Activated T-helper 1 cell treated with anti-CD3 and anti-CD28 coated beads, Interleukin-12 subunit alpha, Interleukin-12 subunit beta, Interleukin-2, Interleukin-4 antibody, amounts not matched to agents 30 ng/mL and 10 ng/mL and 1 ng/mL, durations not matched to agents 14 hours and 24 hours and 36 hours (primary cell): ENCODE measurements at regions of chr2 and their contacts with region 1.

Region 1: GRCh38 chr2:136327162-136327852 is 209.4 kb upstream of the CXCR4 start:
- DNase-seq: peak; percentile 69
- H3K4me3 Mint-ChIP-seq: peak overlapping the region; percentile 43
- H3K27ac Mint-ChIP-seq: peak overlapping the region; percentile 91
- H3K4me1 Mint-ChIP-seq: peaks cover 68% of the 10 kb centered on the region
- H3K27me3 Mint-ChIP-seq: peaks cover 4% of the 10 kb centered on the region

Region 2: DNA sequence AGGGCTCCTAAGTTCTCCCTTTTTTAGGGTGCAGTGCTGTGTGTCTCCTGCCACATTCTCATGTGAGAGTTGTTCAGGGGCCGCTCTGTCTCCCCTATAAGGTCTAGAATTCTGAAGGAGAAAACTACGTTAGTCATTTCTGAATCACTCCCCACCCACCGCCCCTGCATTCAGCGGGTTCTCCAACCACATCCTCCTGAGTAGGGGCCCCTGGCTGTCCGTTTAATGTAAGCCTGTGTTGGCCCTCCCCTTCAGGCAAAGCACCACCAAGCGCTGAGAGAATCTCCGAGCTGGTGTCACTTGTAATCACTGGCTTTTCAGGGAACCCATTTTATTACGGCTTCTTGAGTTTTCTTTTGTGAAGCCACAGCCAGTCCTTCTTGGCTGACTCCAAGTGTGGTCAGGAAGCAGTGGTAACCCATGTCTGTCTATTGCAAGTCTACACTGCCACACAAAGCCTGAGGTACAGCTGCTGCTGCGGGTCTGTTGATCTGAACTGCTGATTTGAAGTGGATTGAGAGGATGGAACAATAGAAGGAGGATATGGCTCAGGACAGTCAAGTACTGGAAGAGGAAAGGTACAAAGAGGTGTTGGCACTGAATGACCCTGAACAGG is 507.2 kb before region 1 on chr2:
- intact Hi-C with region 1: loop called (anchors 5 kb)
- DNase-seq: peak; percentile 75
- H3K4me3 Mint-ChIP-seq: peak overlapping the region; percentile 80
- H3K27ac Mint-ChIP-seq: peak overlapping the region; percentile 89
- H3K4me1 Mint-ChIP-seq: peaks cover 52% of the 10 kb centered on the region
- H3K27me3 Mint-ChIP-seq: no peaks in the 10 kb centered on the region

Region 3: GRCh38 chr2:135948642-135949355 is 378.5 kb before region 1 on chr2:
- intact Hi-C with region 1: loop called (anchors 1 kb)
- DNase-seq: no peak
- H3K4me3 Mint-ChIP-seq: peak overlapping the region; percentile 53
- H3K27ac Mint-ChIP-seq: peak overlapping the region; percentile 87
- H3K4me1 Mint-ChIP-seq: peaks cover 58% of the 10 kb centered on the region
- H3K27me3 Mint-ChIP-seq: no peaks in the 10 kb centered on the region

Region 4: DNA sequence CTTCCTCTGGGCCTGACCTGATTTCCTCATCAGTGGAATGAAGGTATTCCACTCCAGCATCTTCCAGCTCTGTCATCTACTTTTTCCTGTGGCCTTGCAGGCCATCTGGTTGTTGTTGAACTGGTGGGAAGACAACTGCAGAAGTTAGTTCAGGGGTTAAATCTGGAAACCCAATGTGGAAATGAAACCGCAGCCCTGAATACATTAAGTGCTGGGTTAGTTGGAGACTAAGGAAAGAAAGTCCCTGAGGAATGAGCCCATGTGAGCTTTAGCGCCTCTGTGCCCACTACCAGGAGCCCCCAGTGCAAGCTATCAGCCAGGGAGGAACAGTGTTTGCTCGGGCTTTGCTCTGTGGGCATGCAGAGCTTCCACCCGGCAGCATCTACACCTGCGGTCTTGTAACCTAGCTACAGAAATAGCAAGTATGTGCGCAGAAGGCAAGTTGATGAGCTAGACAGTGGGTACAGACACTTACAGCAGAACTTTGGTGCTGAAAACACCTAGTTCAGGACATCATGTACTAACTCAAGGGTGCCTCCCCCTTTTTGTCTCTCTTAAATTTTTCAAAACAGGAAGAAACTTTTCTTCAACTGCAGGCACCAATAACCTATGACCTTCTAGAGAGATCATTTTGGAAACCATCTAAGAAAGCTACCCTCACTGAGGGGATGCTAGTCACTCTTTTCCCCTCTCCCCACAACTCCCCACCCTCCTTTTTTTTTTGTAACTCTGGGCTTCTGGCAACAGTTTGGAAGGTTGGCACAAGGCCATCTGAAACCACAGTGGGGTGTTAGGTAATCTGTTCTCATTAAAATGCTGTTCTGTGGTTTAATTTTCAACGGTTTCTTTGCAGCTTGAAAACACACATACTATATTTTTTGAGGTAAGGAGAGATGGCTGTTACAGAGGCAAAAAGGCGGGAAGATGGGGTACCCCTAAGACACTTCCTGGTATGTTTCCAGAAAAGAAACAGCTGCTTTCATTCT is 191.1 kb before region 1 on chr2:
- intact Hi-C with region 1: loop called (anchors 1 kb)
- DNase-seq: peak; percentile 59
- H3K4me3 Mint-ChIP-seq: peak overlapping the region; percentile 17
- H3K27ac Mint-ChIP-seq: peak overlapping the region; percentile 60
- H3K4me1 Mint-ChIP-seq: peaks cover 82% of the 10 kb centered on the region
- H3K27me3 Mint-ChIP-seq: peaks cover 30% of the 10 kb centered on the region

Region 5: DNA sequence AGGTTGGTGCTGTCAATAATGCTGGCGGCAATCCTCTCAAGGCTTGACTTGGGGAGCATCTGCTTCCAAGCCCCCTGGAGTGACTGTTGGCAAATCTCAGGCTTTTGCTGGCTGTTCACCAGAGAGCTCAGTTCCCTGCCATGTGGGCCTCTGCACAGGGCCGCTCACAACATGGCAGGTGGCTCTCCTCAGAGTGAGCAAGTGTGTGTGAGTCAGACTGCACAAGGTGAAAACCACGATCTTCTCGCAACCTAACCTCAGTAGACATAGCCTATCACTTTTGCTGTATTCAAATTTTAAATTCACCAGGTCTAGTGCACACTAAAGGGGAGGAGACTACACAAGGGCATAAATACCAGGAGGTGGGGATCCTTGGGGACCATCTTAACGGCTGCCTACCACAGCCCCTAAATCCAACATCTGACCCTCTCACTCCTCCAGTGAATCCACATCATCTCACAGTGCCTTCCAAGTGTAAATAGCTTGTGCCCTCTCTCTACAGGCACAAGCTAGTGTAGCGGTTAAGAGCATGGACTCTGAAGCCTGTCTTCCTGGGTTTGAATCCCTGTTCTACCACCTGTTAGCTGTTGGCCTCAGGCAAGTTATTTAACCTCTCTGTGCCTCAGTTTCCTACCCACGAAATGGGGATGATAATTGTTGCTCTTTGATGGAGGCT is 21.7 kb before region 1 on chr2:
- intact Hi-C with region 1: loop called (anchors 1 kb)
- DNase-seq: peak; percentile 47
- H3K4me3 Mint-ChIP-seq: no peak overlapping the region
- H3K27ac Mint-ChIP-seq: peak overlapping the region; percentile 70
- H3K4me1 Mint-ChIP-seq: peaks cover 34% of the 10 kb centered on the region
- H3K27me3 Mint-ChIP-seq: peaks cover 2% of the 10 kb centered on the region

Region 6: GRCh38 chr2:136378712-136379595 is 51.6 kb after region 1 on chr2:
- intact Hi-C with region 1: loop called (anchors 1 kb)
- DNase-seq: peak; percentile 70
- H3K4me3 Mint-ChIP-seq: no peak overlapping the region
- H3K27ac Mint-ChIP-seq: no peak overlapping the region
- H3K4me1 Mint-ChIP-seq: peaks cover 80% of the 10 kb centered on the region
- H3K27me3 Mint-ChIP-seq: no peaks in the 10 kb centered on the region